ENCODE measurements at regions of chr10 and their contacts with region 1.

Region 1: DNA sequence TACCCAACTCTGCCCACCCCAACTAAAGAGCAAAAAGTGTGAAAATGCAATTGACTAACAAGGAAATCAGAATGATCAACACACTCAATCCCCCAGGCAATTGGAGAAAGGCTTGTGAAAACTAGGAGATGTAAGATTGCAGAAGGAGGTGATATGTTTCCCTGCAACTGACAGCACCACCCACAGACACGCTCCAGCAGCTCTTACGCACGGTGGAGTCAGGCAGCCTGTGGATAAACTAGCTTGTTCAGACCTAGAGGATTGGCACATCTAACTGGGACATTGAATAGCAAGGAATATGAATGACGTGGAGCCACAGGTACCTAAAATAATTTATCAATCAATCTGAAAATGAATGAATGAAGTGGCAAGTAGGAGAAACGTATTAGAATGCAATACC is 125.7 kb upstream of the MYO3A start:
- H3K4me3 Mint-ChIP-seq: no peak overlapping the region
- H3K27ac Mint-ChIP-seq: no peak overlapping the region
- H3K4me1 Mint-ChIP-seq: no peaks in the 10 kb centered on the region
- H3K27me3 Mint-ChIP-seq: peaks cover 3% of the 10 kb centered on the region

Region 2: DNA sequence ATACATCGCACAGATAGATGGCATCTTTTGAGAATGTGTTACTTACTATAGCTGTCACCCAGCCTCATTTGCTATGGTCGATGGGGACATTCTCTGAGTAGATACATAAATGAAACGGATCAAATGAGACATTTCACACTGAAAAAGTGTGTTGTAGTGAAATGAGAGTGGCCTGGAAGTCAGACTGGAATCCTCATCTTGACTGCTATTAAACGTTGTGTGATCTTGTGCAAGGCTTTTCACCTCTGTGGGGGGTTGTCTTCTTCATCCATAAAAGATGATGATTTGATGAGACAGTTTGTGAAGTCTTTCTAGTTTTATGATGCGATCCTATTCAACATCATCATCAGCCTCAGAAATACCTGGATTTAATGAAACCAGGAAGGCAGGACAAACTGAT is 29.7 kb before region 1 on chr10:
- intact Hi-C with region 1: loop called (anchors 1 kb)
- H3K4me3 Mint-ChIP-seq: no peak overlapping the region
- H3K27ac Mint-ChIP-seq: no peak overlapping the region
- H3K4me1 Mint-ChIP-seq: no peaks in the 10 kb centered on the region
- H3K27me3 Mint-ChIP-seq: peaks cover under 1% of the 10 kb centered on the region